Heart right ventricle (tissue), 16 donors: ENCODE measurements at regions of chr19 and their contacts with region 1.

Region 1: GRCh38 chr19:4831304-4831978 is at the start of gene TICAM1:
- DNase-seq: peak; percentile 77 to 82
- ATAC-seq: peak; percentile 96 to 98 (median 98)
- H3K4me3 ChIP-seq: peak within 1 kb of the TSS; percentile 60 to 99 (median 92)
- H3K27ac ChIP-seq: peak within 1 kb of the TSS; percentile 72 to 99 (median 94)
- H3K4me1 ChIP-seq: peaks cover 0 to 25% (median 15%) of the 10 kb centered on the region in 9 donors
- H3K27me3 ChIP-seq: no peaks in the 10 kb centered on the region
- CTCF ChIP-seq: peak in 4 of 9 donors; percentile 6 to 29 (median 18)
- total RNA-seq, gene TICAM1: 4.5 to 11.1 (median 6.9) TPM

Region 2: DNA sequence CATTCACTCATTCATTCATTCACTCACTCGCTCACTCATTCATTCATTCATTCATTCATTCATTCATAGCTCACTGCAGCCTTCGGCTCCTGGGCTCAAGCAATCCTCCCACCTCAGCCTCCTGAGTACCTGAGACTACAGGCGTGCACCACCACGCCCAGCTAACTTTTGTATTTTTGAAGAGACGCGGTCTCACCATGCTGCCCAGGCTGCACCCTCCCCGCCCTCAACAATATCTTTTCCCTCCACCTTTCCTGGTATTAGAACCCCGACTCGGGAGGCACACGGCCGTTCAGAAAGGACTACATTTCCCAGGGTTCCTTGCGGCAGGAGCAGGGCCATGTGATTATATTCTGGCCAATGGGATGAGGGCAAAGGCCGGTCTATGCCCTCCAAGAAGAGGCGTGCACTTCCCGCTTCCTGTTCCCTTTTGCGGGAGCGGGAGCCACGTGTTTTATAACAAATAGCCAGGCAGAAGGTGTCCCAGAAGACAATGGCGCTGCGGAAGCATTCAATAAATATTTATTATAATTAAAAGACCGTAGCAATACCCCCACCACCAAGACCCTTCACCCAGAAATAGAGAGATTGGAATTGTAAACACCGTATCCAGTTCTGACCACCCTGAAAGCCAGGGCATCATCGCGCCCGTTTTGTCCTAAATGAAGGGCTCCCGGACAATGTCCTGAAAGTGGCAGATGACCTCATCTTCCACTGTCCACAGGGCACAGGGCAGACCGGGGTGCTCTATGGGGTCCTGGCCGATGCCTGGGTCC is 15.8 kb before region 1 on chr19:
- intact Hi-C with region 1: loop called in 1 of 10 experiments (anchors 2 kb)
- DNase-seq: peak; percentile 78 to 94
- ATAC-seq: peak; percentile 81 to 96 (median 94)
- H3K4me3 ChIP-seq: peak overlapping the region in 7 of 10 donors; percentile 9 to 42 (median 30)
- H3K27ac ChIP-seq: peak overlapping the region in 6 of 10 donors; percentile 36 to 82 (median 56)
- H3K4me1 ChIP-seq: peaks cover 6 to 43% (median 19%) of the 10 kb centered on the region in 9 donors
- H3K27me3 ChIP-seq: no peaks in the 10 kb centered on the region
- CTCF ChIP-seq: no peak